ENCODE measurements at regions of chr16 and their contacts with region 1.

Region 1: DNA sequence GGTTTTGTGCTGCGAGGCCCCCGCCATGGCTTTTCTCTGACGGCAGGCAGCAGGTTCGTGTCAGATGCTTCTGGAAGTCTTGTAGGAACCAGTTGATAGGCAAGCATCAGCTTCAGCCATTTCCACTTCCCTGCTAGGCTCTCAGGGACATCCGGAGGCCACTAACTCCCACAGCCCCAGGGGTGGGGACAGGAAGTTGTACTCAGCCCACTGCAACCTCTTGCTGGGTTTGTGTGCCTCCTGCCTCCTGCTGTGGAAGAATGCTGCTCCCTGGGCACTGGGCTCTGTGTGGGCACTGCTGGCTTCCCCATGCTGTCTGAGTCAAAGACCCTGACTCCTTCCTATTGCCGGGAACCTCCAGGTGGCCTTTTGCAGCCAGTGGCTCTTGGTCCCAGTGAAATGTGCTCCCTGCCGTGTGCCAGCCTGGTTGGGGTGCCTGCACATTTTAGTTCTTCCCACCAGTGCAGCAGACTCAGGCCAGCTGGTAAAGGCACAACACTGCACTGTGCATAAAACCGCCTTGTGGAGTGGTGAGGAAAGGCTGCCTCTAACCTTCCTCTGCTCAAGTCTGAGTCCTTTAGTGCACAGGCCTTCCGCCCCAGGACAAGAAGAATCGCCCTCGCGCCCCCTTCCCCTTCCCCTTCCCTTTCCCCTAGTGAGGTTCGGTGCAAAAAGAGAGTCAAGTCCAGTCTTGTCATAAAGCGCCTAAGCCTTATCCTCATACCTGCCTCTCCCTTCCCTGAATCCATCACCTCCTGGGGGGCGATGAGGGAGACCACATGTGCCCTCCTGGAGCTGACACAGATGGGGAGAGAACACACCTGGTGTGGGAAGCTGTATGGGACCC is 16.6 kb downstream of the LDHD start:
- DNase-seq: no peak
- H3K4me3 Mint-ChIP-seq: no peak overlapping the region
- H3K27ac Mint-ChIP-seq: no peak overlapping the region
- H3K4me1 Mint-ChIP-seq: peaks cover 15% of the 10 kb centered on the region
- H3K27me3 Mint-ChIP-seq: peaks cover 16% of the 10 kb centered on the region
- CTCF ChIP-seq: no peak

Region 2: GRCh38 chr16:74998481-74999218 is 101.3 kb before region 1 on chr16 and contains the start of gene ZNRF1:
- CTCF ChIA-PET with region 1: interaction called, 11 read pairs
- intact Hi-C with region 1: no loop called
- DNase-seq: peak; percentile 88
- H3K4me3 Mint-ChIP-seq: peak within 1 kb of the TSS; percentile 72
- H3K27ac Mint-ChIP-seq: peak within 1 kb of the TSS; percentile 63
- H3K4me1 Mint-ChIP-seq: peaks cover 46% of the 10 kb centered on the region
- H3K27me3 Mint-ChIP-seq: peaks cover 9% of the 10 kb centered on the region
- CTCF ChIP-seq: peak; percentile 92
- total RNA-seq, gene ZNRF1: 27.1 and 27.5 TPM in 2 replicates

Region 3: DNA sequence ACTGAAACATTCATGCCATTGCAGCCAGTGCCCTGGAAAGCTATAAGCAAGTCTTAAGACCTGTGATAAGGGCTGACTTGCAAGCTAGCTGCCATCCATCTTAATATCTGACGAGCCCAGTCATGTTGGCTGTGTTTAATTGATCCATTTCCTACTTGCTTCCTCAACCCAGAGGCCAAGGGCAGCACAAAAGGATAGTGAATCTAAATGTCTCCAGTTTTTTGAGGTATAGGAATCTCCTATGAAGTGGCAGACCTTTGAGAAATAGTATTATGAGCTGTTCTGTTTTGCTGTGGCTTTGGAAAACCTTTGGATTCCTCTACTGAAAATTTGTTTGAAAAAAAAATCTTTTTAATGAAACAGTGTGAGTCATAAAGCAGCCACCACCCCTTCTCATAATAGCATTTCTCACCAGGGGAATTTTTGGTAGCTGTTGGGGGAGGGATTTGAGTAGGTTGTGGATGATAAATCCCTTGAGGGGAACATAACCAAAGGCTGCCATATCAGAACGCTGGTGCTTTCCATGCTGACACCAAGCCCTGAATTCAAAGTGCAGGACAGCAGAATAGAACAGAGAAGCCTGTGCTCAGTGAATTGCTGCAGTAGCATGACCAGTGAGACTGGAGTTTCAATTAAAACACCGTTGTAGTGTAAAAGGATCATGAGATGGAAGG is 88.2 kb before region 1 on chr16:
- CTCF ChIA-PET with region 1: interaction called, 9 read pairs
- intact Hi-C with region 1: loop called (anchors 5 kb)
- DNase-seq: peak; percentile 51
- H3K4me3 Mint-ChIP-seq: peak overlapping the region; percentile 34
- H3K27ac Mint-ChIP-seq: peak overlapping the region; percentile 33
- H3K4me1 Mint-ChIP-seq: peaks cover 24% of the 10 kb centered on the region
- H3K27me3 Mint-ChIP-seq: no peaks in the 10 kb centered on the region
- CTCF ChIP-seq: no peak